ENCODE measurements at regions of chr1 and their contacts with region 1.

Region 1: GRCh38 chr1:210400043-210400840 is 71.5 kb downstream of the HHAT start:
- DNase-seq: no peak

Region 2: DNA sequence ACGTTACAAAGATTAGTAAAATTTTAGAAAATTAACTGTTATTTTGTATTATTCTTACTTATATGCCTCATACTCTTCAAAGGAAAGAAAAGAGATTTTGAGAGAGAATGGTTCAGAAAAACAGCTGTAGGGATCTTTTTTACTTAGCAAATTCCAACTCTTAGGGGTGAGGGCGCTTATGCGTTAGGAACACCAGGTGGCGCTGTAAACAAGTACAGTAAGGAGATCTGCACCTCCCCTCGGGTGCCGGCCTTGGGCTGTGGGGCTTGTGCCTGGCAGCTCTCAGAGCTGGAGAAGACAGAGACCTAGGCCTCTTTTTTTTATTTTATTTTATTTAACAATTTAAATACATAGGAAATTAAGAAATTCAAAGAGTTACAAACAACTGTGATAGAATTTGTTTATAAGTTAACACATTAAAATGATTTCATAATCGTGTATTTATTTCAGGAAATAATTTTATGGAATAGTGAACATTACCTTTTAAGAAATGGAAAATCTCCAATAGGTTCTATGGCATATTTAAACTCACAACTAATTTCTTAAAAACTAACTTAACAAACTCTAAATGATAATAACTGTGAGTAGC is 539.9 kb before region 1 on chr1:
- intact Hi-C with region 1: loop called (anchors 10 kb)
- DNase-seq: no peak

Region 3: DNA sequence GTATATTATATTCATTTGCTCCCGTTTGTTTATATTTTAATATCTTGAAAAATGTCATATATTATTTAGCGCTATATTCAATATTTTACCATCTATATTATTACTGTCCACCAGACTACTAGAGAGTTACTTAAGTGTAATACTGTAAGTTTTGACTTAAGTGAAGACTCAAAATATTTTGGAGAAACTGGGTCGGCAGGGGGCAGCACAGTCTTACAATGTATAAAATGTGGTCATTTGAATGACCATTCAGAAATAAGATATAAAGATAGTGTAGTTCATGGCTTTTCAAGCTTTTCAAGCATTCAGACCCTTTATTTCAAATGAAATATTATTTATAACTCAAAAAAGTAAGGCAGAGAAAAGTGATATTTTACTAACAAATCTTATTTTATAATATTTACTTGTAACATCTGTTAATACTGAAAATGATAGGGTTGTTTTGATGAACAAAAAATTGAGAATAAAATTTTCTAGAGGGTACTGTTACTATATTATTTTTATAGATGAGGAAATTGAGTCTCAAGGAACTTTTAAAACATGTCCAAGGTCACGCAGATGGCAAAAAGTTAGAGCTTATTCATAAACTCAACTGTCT is 256.7 kb before region 1 on chr1:
- intact Hi-C with region 1: loop called (anchors 2 kb)
- DNase-seq: no peak

Region 4: GRCh38 chr1:210311726-210312493 is 88.3 kb before region 1 on chr1:
- intact Hi-C with region 1: loop called (anchors 5 kb)
- DNase-seq: no peak

Region 5: DNA sequence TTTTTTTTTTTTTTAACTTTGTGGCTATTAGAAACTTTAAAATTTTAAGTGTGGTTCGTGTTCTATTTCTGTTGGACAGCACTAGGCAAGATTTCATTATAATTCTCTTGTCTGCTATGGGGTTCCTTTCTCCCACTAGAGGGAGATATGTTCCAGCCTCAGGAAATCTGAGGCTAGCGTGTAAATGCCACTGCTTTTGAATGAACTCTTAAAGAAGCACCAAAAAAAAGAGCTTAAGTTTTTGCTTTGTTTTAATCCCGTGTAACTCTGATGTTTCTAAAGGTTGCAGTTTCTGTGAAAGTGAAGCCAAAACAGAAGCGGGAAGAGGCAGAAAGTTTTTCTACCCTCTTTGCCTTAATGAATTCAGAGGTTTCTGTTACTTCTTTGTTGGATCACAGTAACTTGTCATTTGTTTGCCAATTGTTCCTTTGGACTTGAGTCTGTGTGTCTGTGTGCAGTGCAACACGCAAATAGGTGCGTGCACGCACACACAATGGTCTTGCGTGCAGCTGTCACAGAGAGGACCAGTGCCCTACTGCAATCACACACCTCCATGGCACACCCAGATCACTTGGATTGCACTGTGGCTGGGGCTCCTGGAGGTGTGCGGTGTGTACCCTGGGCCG is 39.3 kb before region 1 on chr1:
- intact Hi-C with region 1: loop called (anchors 1 kb)
- DNase-seq: no peak

Region 6: DNA sequence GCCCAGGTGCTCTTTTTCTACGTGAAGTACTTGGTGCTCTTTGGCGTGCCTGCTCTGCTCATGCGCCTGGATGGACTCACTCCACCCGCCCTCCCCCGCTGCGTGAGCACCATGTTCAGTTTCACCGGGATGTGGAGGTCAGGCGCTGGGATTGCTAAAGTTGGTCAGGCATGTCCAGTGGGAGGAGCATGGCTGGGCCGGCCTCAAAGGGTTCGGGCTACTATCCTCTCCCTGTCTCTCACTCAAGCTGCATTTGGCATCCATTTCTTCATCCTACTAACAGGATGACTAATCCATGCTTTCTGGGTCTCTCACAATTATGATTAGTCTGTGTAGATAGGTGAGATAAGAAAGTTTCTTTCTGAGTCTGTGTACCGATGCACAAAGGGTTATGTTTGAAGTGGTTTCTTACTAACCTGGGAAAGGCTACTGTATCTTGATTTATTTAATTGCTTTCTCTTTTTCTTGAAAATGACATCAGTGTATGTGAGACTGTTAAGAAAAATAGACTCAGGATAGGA is 64.3 kb after region 1 on chr1:
- intact Hi-C with region 1: no loop called
- DNase-seq: no peak